Heart left ventricle (tissue), 16 donors: ENCODE measurements at regions of chr2 and their contacts with region 1.

Region 1: DNA sequence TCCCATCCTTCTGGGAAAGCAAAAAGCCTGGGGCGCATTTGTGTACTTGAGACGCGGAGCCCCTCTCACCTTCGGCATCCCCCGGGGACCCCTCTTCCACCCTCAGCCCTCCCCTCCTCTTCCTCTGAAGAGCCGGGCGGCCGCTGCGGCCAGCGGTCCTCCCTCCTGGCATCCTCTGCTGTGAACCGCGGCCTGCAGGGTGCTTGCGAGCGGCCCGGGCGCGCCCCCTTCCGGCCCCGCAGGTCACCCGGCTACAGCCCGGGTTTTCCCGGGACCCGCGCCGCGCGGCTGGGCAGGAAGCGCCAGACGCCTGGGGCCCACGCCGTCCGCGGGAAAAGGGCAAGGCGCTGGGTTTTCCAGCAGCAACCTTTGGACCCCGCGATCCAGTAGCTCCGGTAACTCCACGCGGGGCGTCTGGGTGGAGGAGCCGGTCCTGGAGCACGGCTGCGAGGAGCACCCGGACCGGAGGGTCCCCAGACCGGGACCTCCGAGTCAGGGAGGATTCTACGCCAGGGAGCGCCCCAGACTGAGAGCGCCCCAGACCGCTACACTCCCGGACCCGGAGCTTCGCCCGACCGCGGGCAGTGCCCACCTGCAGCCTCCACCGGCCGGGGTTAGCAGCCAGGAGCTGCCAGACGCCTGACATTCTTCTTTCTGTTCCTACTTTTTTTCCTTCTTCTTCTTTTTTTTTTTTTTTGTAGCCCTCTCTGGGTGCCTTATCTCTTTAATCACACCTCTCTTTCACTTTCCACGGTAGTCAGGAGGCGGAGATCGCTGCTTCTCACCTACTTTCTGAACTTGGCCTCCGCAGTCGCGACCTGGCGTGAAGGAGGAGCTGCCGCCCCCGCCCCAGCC is at the start of gene IL18R1:
- DNase-seq: peak; percentile 79 to 91 (median 84)
- ATAC-seq: peak; percentile 89 to 100 (median 98)
- H3K4me3 ChIP-seq: peak within 1 kb of the TSS; percentile 45 to 82 (median 74)
- H3K27ac ChIP-seq: peak within 1 kb of the TSS in 10 of 12 donors; percentile 12 to 89 (median 66)
- H3K4me1 ChIP-seq: peaks cover 0 to 28% (median 2%) of the 10 kb centered on the region in 12 donors
- H3K27me3 ChIP-seq: peaks cover 0 to 4% (median 0%) of the 10 kb centered on the region in 9 donors
- CTCF ChIP-seq: peak; percentile 76 to 96 (median 86)
- POLR2A ChIP-seq: peak in 1 of 2 donors; percentile 37
- total RNA-seq, gene IL18R1: 0.50 to 4.3 (median 1.8) TPM

Region 2: GRCh38 chr2:102005989-102006885 is 349.5 kb before region 1 on chr2:
- intact Hi-C with region 1: loop called in 3 of 10 experiments (anchors 10 kb)
- DNase-seq: peak in 1 of 5 donors; percentile 34
- ATAC-seq: peak; percentile 50 to 84 (median 70)
- H3K4me3 ChIP-seq: no peak overlapping the region
- H3K27ac ChIP-seq: no peak overlapping the region
- H3K4me1 ChIP-seq: peaks cover 0 to 29% (median 6%) of the 10 kb centered on the region in 12 donors
- H3K27me3 ChIP-seq: no peaks in the 10 kb centered on the region
- CTCF ChIP-seq: peak; percentile 36 to 73 (median 60)
- POLR2A ChIP-seq: no peak

Region 3: GRCh38 chr2:102240640-102241370 is 114.9 kb before region 1 on chr2:
- intact Hi-C with region 1: loop called in 1 of 10 experiments (anchors 5 kb)
- DNase-seq: peak; percentile 91 to 95 (median 92)
- ATAC-seq: peak; percentile 89 to 96 (median 94)
- H3K4me3 ChIP-seq: peak overlapping the region in 6 of 12 donors; percentile 5 to 33 (median 16)
- H3K27ac ChIP-seq: peak overlapping the region; percentile 58 to 88 (median 79)
- H3K4me1 ChIP-seq: peaks cover 0 to 29% (median 11%) of the 10 kb centered on the region in 12 donors
- H3K27me3 ChIP-seq: peaks cover 0 to 2% (median 0%) of the 10 kb centered on the region in 9 donors
- CTCF ChIP-seq: peak; percentile 97 to 100 (median 99)
- POLR2A ChIP-seq: peak in 1 of 2 donors; percentile 23

Region 4: GRCh38 chr2:102258386-102259074 is 97.2 kb before region 1 on chr2:
- intact Hi-C with region 1: loop called in 4 of 10 experiments (anchors 2 to 5 kb)
- DNase-seq: no peak
- ATAC-seq: peak in 2 of 4 donors; percentile 54 to 65
- H3K4me3 ChIP-seq: no peak overlapping the region
- H3K27ac ChIP-seq: peak overlapping the region in 1 of 12 donors; percentile 17
- H3K4me1 ChIP-seq: peaks cover 0 to 43% (median 0%) of the 10 kb centered on the region in 12 donors
- H3K27me3 ChIP-seq: peaks cover 0 to 4% (median 0%) of the 10 kb centered on the region in 9 donors
- CTCF ChIP-seq: no peak
- POLR2A ChIP-seq: no peak

Region 5: DNA sequence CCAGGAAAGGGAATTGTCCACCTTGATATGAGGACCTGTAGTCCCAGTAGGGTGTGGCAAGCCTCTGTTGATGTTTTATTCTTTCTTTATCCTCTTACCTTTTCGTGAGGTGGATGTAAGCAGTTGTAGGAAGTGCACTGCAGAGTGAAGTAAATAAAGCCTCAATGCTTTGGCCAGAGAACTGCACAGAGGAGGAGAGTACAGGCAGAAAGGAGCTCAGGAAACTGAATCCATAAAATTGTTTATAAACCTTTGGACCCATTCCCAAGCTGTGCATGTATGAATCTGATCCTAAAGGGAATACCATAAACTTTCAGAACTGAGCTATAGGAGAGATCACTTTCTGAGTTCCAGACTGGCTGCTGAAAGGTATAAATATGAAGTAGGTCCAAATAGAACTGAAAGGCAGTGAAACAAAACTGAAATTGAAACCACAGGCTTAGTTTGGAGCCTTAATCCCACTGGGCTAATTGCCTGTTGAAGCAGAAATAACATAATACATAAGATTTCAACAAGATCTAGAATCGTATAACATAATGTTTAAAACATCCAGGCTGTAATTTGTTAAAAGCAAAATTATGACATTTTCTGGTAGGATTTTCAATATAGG is 99.4 kb after region 1 on chr2:
- intact Hi-C with region 1: no loop called
- DNase-seq: no peak
- ATAC-seq: no peak
- H3K4me3 ChIP-seq: no peak overlapping the region
- H3K27ac ChIP-seq: no peak overlapping the region
- H3K4me1 ChIP-seq: peaks cover 0 to 3% (median 0%) of the 10 kb centered on the region in 12 donors
- H3K27me3 ChIP-seq: no peaks in the 10 kb centered on the region
- CTCF ChIP-seq: no peak
- POLR2A ChIP-seq: no peak